Heart right ventricle (tissue), 16 donors: ENCODE measurements at regions of chr6 and their contacts with region 1.

Region 1: DNA sequence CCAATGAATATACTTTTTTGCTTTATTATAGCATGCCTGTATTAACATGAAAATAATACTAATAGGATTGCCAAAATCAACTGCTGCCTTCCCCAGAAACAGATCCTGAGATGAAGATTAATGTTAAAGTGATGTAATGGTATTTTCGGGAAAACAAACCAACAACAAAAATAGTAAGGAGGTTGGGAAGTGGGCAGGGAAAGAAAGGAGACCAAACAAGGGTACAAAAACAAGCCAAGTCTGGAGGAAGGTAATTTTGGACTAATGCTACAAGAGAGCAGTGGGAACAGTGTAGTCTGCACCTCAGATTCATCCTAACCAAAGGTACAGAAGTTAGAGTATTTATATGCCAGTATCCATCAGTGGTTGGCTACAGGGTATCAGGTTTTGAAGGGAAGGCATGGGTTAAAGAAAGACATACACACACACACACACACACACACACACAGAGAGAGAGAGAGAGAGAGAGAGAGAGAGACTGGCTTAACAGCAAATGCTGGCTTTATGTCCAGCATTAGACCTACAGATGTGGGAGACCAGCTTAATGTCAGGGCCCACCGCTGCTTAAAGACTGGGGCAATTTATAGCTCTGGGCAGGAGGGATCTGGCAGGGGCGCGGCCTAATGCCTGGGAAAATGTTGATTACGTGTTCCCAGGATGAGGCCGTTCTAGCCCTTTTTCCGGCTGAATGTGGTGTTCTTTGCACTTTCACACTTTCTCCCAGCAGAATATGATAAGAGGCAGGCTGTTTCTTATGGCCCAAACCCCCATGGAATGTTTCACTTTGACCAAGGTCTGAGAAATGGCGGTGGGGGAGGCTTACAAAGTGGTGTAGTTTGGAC is 3.8 kb upstream of the SLC17A1 start:
- DNase-seq: peak; percentile 8 to 14
- ATAC-seq: peak in 5 of 8 donors; percentile 49 to 67 (median 62)
- H3K4me3 ChIP-seq: peak overlapping the region in 1 of 10 donors; percentile 6
- H3K27ac ChIP-seq: peak overlapping the region in 3 of 10 donors; percentile 7 to 52 (median 13)
- H3K4me1 ChIP-seq: peaks cover 0 to 11% (median 0%) of the 10 kb centered on the region in 9 donors
- H3K27me3 ChIP-seq: peaks cover 0 to 12% (median 0%) of the 10 kb centered on the region in 7 donors
- CTCF ChIP-seq: no peak

Region 2: DNA sequence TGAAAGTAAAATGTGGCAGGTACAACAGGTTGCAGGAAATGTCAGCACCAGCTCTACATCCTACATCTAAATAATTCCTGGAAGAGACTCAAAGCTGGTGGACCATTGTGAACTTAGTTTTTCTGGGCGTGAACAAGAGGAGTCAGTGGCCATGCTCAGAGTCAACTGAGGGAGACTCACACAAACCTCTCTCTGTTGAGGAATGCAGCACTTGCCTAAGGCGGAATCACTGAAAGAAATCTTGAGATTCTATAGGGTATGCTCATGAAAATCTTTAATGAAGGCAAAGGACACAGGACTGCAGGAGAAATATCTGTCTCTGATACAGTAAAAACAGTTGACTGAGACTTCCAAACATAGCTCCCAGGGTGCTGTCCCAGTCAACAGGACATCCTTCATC is 58.6 kb before region 1 on chr6:
- intact Hi-C with region 1: loop called in 1 of 10 experiments (anchors 5 kb)
- DNase-seq: no peak
- ATAC-seq: no peak
- H3K4me3 ChIP-seq: no peak overlapping the region
- H3K27ac ChIP-seq: no peak overlapping the region
- H3K4me1 ChIP-seq: no peaks in the 10 kb centered on the region
- H3K27me3 ChIP-seq: peaks cover 0 to 13% (median 3%) of the 10 kb centered on the region in 7 donors
- CTCF ChIP-seq: no peak

Region 3: DNA sequence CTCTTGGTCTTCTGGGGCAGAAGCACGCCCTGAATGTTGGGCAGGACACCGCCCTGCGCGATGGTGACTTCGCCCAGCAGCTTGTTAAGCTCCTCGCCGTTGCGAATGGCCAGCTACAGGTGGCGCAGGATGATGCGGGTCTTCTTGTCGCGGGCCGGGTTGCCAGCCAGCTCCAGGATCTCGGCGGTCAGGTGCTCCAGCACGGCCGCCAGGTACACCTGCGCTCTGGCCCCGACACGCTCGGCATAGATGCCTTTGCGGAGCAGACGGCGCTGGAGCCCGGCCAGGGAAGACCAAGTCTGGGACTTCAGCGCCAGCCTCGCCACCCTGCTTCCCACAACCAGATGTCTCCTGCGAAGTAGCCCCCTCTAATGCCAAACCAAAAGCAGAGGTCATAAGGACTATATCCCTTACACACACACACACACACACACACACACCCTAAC is 46.4 kb after region 1 on chr6:
- intact Hi-C with region 1: no loop called
- DNase-seq: peak; percentile 8 to 14
- ATAC-seq: no peak
- H3K4me3 ChIP-seq: peak overlapping the region in 4 of 10 donors; percentile 19 to 46 (median 28)
- H3K27ac ChIP-seq: no peak overlapping the region
- H3K4me1 ChIP-seq: peaks cover 0 to 6% (median 0%) of the 10 kb centered on the region in 9 donors
- H3K27me3 ChIP-seq: peaks cover 0 to 15% (median 3%) of the 10 kb centered on the region in 7 donors
- CTCF ChIP-seq: peak in 1 of 9 donors; percentile 14